B cell (primary cell): ENCODE measurements at regions of chr2 and their contacts with region 1.

Region 1: GRCh38 chr2:152175458-152176325 is at the start of gene STAM2:
- DNase-seq: peak; percentile 96
- ATAC-seq: peak; percentile 84
- H3K4me3 ChIP-seq: peak within 1 kb of the TSS; percentile 95 to 99 (median 97)
- H3K4me3 Mint-ChIP-seq: peak within 1 kb of the TSS; percentile 95
- H3K27ac ChIP-seq: peak within 1 kb of the TSS; percentile 95 to 99
- H3K27ac Mint-ChIP-seq: peak within 1 kb of the TSS; percentile 100
- H3K4me1 ChIP-seq: peaks cover 17 to 26% of the 10 kb centered on the region in 2 donors
- H3K4me1 Mint-ChIP-seq: peaks cover 32% of the 10 kb centered on the region
- H3K27me3 ChIP-seq: no peaks in the 10 kb centered on the region
- H3K27me3 Mint-ChIP-seq: peaks cover 2% of the 10 kb centered on the region
- CTCF ChIP-seq: peak; percentile 98
- total RNA-seq, gene STAM2: 24.6 and 30.2 TPM in 2 replicates

Region 2: DNA sequence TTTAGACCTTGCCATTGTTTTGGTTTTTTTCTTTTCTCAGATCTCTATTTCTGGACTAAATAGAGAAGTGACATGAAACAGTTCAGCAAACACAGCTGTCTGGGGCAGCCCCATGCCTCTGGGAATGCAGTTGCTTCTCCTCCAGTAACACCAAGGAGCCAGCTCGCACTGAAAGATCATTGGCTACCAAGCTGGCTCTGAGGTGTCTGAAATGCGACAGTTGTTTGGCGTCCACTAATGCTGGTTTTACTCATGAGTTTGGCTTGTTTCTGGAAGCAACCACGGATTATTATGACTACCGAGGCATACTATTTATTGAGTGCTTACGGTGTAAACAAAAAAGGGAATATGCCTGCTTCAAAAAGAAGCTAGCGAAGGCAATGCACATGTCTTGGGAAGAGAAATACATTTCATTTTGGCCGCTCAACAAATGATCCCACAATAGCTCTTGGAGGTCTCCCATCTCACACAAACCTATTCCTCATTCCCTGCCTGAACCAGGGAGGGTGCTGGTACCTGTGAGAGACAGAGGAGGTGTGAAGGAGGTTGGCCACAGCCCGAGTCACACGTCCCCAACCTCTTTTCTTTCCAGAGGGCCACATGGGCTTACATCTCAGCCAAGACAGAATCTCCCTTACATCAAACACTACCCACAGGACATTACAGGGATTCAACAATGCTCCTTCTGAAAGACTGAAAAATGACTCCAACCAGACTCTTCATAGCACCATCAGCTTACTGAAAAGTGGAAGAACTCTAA is 403.9 kb before region 1 on chr2:
- CTCF ChIA-PET with region 1: no interaction called
- POLR2A ChIA-PET with region 1: no interaction called
- intact Hi-C with region 1: loop called (anchors 10 kb)
- DNase-seq: peak; percentile 93
- ATAC-seq: peak; percentile 90
- H3K4me3 ChIP-seq: peak overlapping the region in 1 of 5 experiments; percentile 38
- H3K4me3 Mint-ChIP-seq: peak overlapping the region; percentile 76
- H3K27ac ChIP-seq: peak overlapping the region; percentile 95 to 96
- H3K27ac Mint-ChIP-seq: peak overlapping the region; percentile 93
- H3K4me1 ChIP-seq: peaks cover 78 to 80% of the 10 kb centered on the region in 2 donors
- H3K4me1 Mint-ChIP-seq: peaks cover 90% of the 10 kb centered on the region
- H3K27me3 ChIP-seq: no peaks in the 10 kb centered on the region
- H3K27me3 Mint-ChIP-seq: no peaks in the 10 kb centered on the region
- CTCF ChIP-seq: no peak

Region 3: GRCh38 chr2:152036611-152037469 is 138.9 kb before region 1 on chr2:
- CTCF ChIA-PET with region 1: interaction called, 10 read pairs
- POLR2A ChIA-PET with region 1: no interaction called
- intact Hi-C with region 1: loop called (anchors 10 kb)
- DNase-seq: peak; percentile 72
- ATAC-seq: peak; percentile 58
- H3K4me3 ChIP-seq: no peak overlapping the region
- H3K4me3 Mint-ChIP-seq: no peak overlapping the region
- H3K27ac ChIP-seq: no peak overlapping the region
- H3K27ac Mint-ChIP-seq: no peak overlapping the region
- H3K4me1 ChIP-seq: no peaks in the 10 kb centered on the region
- H3K4me1 Mint-ChIP-seq: no peaks in the 10 kb centered on the region
- H3K27me3 ChIP-seq: no peaks in the 10 kb centered on the region
- H3K27me3 Mint-ChIP-seq: no peaks in the 10 kb centered on the region
- CTCF ChIP-seq: peak; percentile 82

Region 4: DNA sequence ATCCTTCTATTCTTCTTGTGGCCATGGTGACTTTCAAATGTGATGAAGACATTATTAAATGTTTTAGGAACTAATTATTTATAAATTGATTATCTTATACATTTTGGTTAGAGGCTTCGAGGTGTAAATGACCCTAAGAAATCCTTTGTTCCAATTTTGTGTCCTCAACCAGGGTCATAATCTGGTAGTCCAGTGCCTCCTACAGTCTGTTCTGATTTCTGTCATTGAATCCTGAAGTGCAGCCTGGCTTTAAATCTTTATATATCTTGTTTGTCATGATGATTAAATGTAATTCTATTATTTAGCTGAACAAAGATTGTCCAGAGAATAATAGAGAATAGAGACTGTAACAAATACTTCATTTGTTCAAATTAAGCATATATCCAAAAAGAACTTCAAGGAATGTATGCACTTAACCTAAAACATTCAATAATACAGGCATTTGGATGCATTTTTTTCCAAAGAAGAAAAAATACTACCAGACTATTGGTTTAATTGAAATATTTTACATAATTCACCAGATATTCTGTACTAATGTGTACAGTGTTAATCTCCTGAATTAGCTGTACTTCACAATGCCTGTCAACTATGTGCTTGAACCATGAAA is 451.8 kb after region 1 on chr2:
- CTCF ChIA-PET with region 1: interaction called, 67 read pairs
- POLR2A ChIA-PET with region 1: no interaction called
- intact Hi-C with region 1: no loop called
- DNase-seq: peak; percentile 33
- ATAC-seq: no peak
- H3K4me3 ChIP-seq: no peak overlapping the region
- H3K4me3 Mint-ChIP-seq: no peak overlapping the region
- H3K27ac ChIP-seq: no peak overlapping the region
- H3K27ac Mint-ChIP-seq: no peak overlapping the region
- H3K4me1 ChIP-seq: no peaks in the 10 kb centered on the region
- H3K4me1 Mint-ChIP-seq: no peaks in the 10 kb centered on the region
- H3K27me3 ChIP-seq: no peaks in the 10 kb centered on the region
- H3K27me3 Mint-ChIP-seq: no peaks in the 10 kb centered on the region
- CTCF ChIP-seq: peak; percentile 71

Region 5: DNA sequence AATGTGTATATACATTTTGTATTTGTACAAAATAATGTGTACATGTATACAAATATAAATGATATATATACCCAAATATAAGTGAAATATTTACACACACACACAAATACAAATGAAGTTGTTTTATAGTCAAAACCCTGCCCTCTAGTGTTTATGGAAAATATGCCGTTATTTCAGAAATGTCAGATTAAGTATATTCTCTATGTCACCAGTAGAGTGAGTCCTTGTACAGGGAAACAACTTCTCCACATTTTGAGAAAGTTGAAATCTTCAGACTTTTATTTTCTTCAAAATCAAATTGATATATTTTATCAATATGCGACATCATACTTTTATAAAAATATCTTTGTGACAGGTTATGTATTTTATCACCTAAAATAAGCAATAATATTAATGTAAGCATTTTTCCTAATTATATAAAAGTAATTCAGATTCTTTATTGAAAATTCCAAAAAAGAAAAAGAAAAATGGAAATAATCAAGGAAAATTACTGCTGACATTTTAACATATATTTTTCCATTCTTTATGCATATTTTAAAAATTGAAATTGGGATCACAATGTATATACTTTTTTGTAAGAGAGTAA is 565.1 kb after region 1 on chr2:
- CTCF ChIA-PET with region 1: interaction called, 11 read pairs
- POLR2A ChIA-PET with region 1: no interaction called
- intact Hi-C with region 1: no loop called
- DNase-seq: peak; percentile 56
- ATAC-seq: peak; percentile 72
- H3K4me3 ChIP-seq: no peak overlapping the region
- H3K4me3 Mint-ChIP-seq: no peak overlapping the region
- H3K27ac ChIP-seq: no peak overlapping the region
- H3K27ac Mint-ChIP-seq: no peak overlapping the region
- H3K4me1 ChIP-seq: no peaks in the 10 kb centered on the region
- H3K4me1 Mint-ChIP-seq: no peaks in the 10 kb centered on the region
- H3K27me3 ChIP-seq: no peaks in the 10 kb centered on the region
- H3K27me3 Mint-ChIP-seq: no peaks in the 10 kb centered on the region
- CTCF ChIP-seq: peak; percentile 97

Region 6: DNA sequence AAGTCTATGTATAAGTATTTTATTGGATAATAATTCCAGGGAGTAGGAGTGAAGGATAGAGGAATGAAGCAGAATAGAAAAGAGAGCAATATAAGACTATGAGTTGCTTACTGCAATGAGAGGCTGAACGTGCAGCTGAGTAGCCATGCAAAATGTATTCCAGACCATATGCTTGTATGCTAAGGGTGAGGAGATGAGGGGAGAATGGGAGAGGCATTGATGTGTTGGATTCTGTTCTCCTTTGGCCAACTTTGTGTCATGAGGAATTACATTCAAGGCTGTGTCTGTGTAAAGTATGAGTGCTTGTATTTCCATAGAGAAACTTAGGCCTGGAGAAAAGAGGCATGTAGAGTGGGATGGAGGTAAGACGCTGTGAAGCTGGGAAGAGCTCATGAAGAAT is 844.5 kb after region 1 on chr2:
- CTCF ChIA-PET with region 1: no interaction called
- POLR2A ChIA-PET with region 1: no interaction called
- intact Hi-C with region 1: no loop called
- DNase-seq: no peak
- ATAC-seq: no peak
- H3K4me3 ChIP-seq: no peak overlapping the region
- H3K4me3 Mint-ChIP-seq: no peak overlapping the region
- H3K27ac ChIP-seq: no peak overlapping the region
- H3K27ac Mint-ChIP-seq: no peak overlapping the region
- H3K4me1 ChIP-seq: no peaks in the 10 kb centered on the region
- H3K4me1 Mint-ChIP-seq: no peaks in the 10 kb centered on the region
- H3K27me3 ChIP-seq: no peaks in the 10 kb centered on the region
- H3K27me3 Mint-ChIP-seq: no peaks in the 10 kb centered on the region
- CTCF ChIP-seq: no peak

Region 7: DNA sequence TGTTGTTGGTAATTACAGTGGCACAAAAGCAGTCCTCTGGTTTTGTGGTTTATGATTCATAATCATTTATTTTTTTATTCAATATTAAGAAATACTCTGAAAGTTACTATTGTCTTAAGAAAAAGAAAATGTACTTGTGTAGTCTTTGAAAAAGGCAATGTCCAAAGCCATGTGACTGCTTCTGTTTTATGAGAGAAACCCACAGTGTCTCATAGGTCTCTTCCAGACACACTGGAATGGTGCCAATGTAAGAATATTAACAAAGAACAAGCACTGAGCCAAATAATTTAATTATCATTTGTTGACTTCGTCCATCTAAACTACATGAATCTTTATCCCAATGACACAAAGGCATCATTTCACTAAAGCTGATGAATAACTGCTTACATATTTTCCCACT is 1240.4 kb after region 1 on chr2:
- CTCF ChIA-PET with region 1: no interaction called
- POLR2A ChIA-PET with region 1: no interaction called
- intact Hi-C with region 1: no loop called
- DNase-seq: no peak
- ATAC-seq: no peak
- H3K4me3 ChIP-seq: no peak overlapping the region
- H3K4me3 Mint-ChIP-seq: no peak overlapping the region
- H3K27ac ChIP-seq: no peak overlapping the region
- H3K27ac Mint-ChIP-seq: no peak overlapping the region
- H3K4me1 ChIP-seq: no peaks in the 10 kb centered on the region
- H3K4me1 Mint-ChIP-seq: no peaks in the 10 kb centered on the region
- H3K27me3 ChIP-seq: no peaks in the 10 kb centered on the region
- H3K27me3 Mint-ChIP-seq: no peaks in the 10 kb centered on the region
- CTCF ChIP-seq: no peak